GM12878 (cell line): ENCODE measurements at regions of chr11 and their contacts with region 1.

Region 1: GRCh38 chr11:313787-314547 is at the start of gene IFITM1:
- DNase-seq: peak; percentile 92
- ATAC-seq: peak; percentile 47
- H3K4me3 ChIP-seq: peak within 1 kb of the TSS; percentile 87
- H3K27ac ChIP-seq: peak within 1 kb of the TSS; percentile 98
- H3K4me1 ChIP-seq: peaks cover 11% of the 10 kb centered on the region
- H3K27me3 ChIP-seq: no peaks in the 10 kb centered on the region; a peak in 1 of 4 replicates
- CTCF ChIP-seq: no peak
- EP300 ChIP-seq: no peak
- POLR2A ChIP-seq: peak; percentile 88
- RAD21 ChIP-seq: no peak
- polyA plus RNA-seq, gene IFITM1: 1,771 to 2,788 TPM

Region 2: DNA sequence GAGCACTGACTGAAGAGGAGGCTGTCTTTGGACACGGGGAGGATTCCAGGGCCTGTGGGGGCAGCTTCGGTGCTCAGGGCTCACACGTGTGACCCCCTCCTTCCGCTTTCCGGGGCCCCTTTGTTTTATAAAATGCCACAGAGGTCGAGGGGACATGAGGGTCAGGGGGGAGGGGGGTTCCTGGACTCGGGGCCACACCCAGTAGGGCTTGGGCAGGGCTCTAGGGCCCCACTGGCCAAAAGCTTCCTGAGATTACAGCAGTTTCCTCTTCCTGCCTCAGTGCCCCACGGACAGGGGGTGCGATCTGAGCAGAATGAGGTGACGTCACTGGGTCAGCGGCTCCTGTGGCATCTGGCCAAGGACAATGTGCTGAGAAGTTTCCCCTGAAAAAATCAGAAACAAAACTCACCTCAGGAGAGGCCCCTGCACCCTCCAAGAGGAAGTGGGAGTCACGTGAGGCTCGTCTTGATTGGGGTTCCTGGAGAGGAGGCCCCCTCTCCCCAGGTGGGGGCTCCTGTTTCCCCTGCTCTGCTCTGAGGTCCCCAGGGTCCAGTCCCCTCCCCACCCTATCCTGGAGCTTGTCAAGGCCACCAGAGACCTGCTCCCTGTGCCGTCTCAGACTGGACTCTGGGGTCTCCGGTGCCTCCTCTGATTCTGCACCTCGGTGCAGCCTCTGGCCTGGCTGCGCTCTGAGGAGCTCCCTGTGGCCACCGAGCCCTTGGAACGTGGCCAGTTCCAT is 13.0 kb after region 1 on chr11:
- CTCF ChIA-PET with region 1: interaction called, 43 read pairs
- POLR2A ChIA-PET with region 1: interaction called, 45 read pairs
- RAD21 ChIA-PET with region 1: interaction called, 27 read pairs
- SMC1A ChIA-PET with region 1: interaction called, 42 read pairs
- in situ Hi-C with region 1: no loop called
- intact Hi-C with region 1: loop called (anchors 2 kb)
- DNase-seq: peak; percentile 96
- ATAC-seq: peak; percentile 78
- H3K4me3 ChIP-seq: peak overlapping the region; percentile 56
- H3K27ac ChIP-seq: peak overlapping the region; percentile 100
- H3K4me1 ChIP-seq: peaks cover 51% of the 10 kb centered on the region
- H3K27me3 ChIP-seq: no peaks in the 10 kb centered on the region
- CTCF ChIP-seq: no peak
- EP300 ChIP-seq: peak; percentile 87 to 89
- POLR2A ChIP-seq: peak; percentile 70
- RAD21 ChIP-seq: no peak

Region 3: DNA sequence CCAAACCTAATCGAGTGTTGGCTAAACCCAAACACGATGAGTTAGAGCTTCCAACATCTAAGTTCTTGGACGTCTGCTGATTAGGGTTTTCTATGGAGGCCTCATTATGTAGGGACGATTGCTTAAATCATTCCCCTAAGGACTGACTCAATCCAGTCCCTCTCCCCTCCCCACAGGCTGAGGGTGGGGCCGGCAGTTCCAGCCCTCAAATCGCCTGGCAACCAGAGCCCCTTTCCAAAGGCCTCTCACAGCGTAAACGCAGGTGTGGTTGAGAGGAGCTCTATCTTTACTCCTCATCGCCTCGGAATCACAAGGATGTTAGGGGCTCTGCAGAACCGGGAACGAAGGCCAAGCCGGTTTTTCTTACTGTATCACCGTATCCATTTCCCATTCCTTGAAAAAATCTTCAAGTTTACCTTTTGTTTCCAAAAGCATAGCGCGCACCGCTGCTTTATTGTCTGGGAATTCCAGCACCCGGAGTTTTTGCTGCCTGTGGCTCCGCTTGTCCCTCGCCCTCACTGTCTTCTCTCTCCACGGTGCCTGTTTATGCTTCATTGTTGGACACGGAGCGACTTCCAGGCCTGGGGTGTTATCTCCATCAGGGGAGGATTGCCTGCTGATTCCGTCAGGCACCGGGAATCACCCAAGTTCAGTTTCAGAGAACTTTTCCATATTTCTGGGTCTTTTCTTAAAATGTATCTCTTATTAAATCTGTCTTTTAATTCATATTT is 20.5 kb after region 1 on chr11:
- CTCF ChIA-PET with region 1: interaction called, 43 read pairs
- POLR2A ChIA-PET with region 1: interaction called, 45 read pairs
- RAD21 ChIA-PET with region 1: interaction called, 27 read pairs
- SMC1A ChIA-PET with region 1: interaction called, 42 read pairs
- in situ Hi-C with region 1: no loop called
- intact Hi-C with region 1: loop called (anchors 2 kb)
- DNase-seq: no peak
- ATAC-seq: no peak
- H3K4me3 ChIP-seq: no peak overlapping the region
- H3K27ac ChIP-seq: no peak overlapping the region
- H3K4me1 ChIP-seq: peaks cover 25% of the 10 kb centered on the region
- H3K27me3 ChIP-seq: no peaks in the 10 kb centered on the region
- CTCF ChIP-seq: no peak
- EP300 ChIP-seq: no peak
- POLR2A ChIP-seq: no peak
- RAD21 ChIP-seq: no peak

Region 4: DNA sequence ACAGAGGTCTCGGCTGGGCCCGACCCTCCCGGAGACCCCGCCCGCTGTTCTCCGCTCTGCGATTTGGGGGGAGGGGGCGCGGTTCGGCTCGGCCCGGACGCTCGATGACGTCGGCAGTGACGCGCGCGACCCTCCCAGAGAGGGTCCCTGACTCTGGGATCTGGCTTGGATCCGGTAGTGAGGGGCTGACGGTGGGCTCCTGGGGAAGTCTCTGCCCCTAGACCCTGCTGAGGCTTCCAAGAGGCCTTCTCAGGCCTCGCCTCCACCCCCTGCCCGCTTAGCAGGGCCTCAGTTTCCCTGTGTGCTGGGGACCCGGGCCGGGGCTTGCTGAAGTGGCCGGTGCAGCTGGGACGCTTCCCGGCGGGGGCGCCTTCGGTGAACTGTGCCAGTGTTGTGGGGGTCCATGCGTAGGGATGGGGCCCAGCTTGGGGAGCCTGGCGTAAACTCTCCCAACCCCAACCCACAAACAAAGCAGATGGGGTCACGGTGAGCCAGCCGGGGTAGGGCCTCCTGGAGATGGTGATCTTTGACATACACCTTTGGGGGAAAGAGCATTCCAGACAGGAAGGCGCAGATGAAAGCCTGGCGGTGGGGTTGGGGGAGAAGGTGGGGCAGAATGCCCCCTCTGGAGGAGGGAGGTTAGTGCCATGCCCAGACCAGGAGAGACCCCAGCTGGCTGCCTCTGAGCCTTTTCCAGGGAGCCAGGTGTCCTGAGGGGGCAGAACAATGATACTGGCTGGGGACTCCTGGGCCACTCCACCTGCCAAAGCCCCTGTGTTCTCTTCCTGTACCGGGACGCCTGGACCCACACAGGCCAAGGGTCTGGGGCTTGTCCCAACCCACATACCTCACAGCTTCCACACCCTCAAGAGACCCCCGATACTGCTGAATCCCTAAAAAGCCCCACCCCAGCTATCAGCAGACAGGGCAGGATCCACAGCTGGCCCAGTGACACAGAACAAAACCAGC is 56.4 kb after region 1 on chr11:
- CTCF ChIA-PET with region 1: no interaction called
- POLR2A ChIA-PET with region 1: no interaction called
- RAD21 ChIA-PET with region 1: no interaction called
- SMC1A ChIA-PET with region 1: no interaction called
- in situ Hi-C with region 1: no loop called
- intact Hi-C with region 1: no loop called
- DNase-seq: no peak
- ATAC-seq: no peak; the same call in 1 of the 3 replicates
- H3K4me3 ChIP-seq: no peak overlapping the region
- H3K27ac ChIP-seq: no peak overlapping the region
- H3K4me1 ChIP-seq: no peaks in the 10 kb centered on the region
- H3K27me3 ChIP-seq: peaks cover 4 to 8% of the 10 kb centered on the region in 2 experiments; a peak in 3 of 4 replicates
- CTCF ChIP-seq: no peak
- EP300 ChIP-seq: no peak
- POLR2A ChIP-seq: no peak
- RAD21 ChIP-seq: no peak